HCT116 (cell line): ENCODE measurements at regions of chr1 and their contacts with region 1.

Region 1: GRCh38 chr1:205354259-205354904 is 2.3 kb downstream of the KLHDC8A start:
- DNase-seq: peak; percentile 54
- ATAC-seq: peak; percentile 80
- H3K4me3 ChIP-seq: no peak overlapping the region
- H3K27ac ChIP-seq: no peak overlapping the region
- H3K4me1 ChIP-seq: peaks cover 2 to 23% of the 10 kb centered on the region in 2 experiments; a peak in 3 of 4 replicates
- H3K27me3 ChIP-seq: no peaks in the 10 kb centered on the region
- CTCF ChIP-seq: peak; percentile 75 to 86 (median 84)
- POLR2A ChIP-seq: no peak
- RAD21 ChIP-seq: peak; percentile 74

Region 2: DNA sequence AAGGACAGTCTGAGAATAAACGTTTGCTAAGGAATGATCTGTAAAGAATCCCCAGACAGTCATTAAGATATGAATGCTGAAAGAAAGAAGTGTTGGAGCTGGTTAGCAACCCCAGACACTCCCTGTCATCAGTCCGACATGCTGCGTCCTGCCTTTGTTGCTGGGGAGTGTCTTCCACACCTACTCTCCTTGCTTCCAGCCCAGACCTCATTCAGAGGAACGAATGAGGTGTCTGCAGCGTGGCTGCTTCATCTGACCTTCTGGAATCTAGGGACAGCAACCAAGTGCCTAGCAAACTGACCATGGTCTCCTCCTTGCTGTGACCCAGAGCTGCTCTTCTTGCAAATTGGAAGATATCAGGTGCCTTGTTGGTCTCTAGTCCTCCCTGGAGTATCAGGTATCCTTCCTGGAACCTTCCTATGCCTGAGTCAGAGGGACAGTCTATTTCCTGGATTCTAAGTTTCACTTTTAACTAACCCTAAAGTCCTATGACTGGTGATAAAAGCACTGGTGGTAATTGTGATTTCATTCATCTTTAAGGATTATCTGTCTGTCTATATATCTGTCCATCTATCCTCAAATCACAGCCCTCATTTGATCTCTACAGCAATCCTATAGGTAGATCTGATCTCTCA is 438.4 kb before region 1 on chr1:
- CTCF ChIA-PET with region 1: no interaction called
- POLR2A ChIA-PET with region 1: no interaction called
- RAD21 ChIA-PET with region 1: no interaction called
- intact Hi-C with region 1: no loop called
- DNase-seq: no peak
- ATAC-seq: no peak
- H3K4me3 ChIP-seq: no peak overlapping the region
- H3K27ac ChIP-seq: no peak overlapping the region
- H3K4me1 ChIP-seq: peaks cover 0 to 8% of the 10 kb centered on the region in 2 experiments; a peak in 1 of 4 replicates
- H3K27me3 ChIP-seq: no peaks in the 10 kb centered on the region
- CTCF ChIP-seq: no peak
- POLR2A ChIP-seq: no peak
- RAD21 ChIP-seq: no peak

Region 3: DNA sequence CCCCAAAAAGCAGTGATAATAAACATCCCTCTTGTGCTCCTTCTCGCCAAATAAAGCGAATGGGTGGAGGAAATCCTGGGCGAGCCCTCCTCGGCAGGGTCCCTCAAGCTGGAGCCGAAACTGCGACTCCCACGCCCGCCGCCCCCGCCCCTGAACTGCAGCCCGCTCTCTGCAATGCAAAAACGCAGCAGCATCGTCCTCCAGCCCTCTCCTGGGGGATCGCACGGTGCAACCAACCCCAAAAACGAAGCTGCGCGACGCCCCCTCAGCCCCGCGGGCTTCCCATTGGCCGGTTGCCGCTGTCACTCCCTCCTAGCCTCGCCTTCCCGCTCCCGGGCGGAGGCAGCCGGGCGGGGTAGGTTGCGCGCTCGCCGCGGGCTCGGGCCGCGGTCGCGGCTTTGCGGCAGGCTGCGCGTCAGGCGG is 126.8 kb before region 1 on chr1 and contains the start of gene TMCC2:
- CTCF ChIA-PET with region 1: interaction called, 12 read pairs
- POLR2A ChIA-PET with region 1: no interaction called
- RAD21 ChIA-PET with region 1: no interaction called
- intact Hi-C with region 1: no loop called
- DNase-seq: peak; percentile 74
- ATAC-seq: peak; percentile 90
- H3K4me3 ChIP-seq: peak within 1 kb of the TSS; percentile 54 to 67
- H3K27ac ChIP-seq: no peak within 1 kb of the TSS; the same call in 1 of the 2 replicates
- H3K4me1 ChIP-seq: peaks cover 11 to 28% of the 10 kb centered on the region in 2 experiments; a peak in 3 of 4 replicates
- H3K27me3 ChIP-seq: no peaks in the 10 kb centered on the region
- CTCF ChIP-seq: no peak
- POLR2A ChIP-seq: peak; percentile 34
- RAD21 ChIP-seq: no peak
- total RNA-seq, gene TMCC2: 2.7 TPM

Region 4: DNA sequence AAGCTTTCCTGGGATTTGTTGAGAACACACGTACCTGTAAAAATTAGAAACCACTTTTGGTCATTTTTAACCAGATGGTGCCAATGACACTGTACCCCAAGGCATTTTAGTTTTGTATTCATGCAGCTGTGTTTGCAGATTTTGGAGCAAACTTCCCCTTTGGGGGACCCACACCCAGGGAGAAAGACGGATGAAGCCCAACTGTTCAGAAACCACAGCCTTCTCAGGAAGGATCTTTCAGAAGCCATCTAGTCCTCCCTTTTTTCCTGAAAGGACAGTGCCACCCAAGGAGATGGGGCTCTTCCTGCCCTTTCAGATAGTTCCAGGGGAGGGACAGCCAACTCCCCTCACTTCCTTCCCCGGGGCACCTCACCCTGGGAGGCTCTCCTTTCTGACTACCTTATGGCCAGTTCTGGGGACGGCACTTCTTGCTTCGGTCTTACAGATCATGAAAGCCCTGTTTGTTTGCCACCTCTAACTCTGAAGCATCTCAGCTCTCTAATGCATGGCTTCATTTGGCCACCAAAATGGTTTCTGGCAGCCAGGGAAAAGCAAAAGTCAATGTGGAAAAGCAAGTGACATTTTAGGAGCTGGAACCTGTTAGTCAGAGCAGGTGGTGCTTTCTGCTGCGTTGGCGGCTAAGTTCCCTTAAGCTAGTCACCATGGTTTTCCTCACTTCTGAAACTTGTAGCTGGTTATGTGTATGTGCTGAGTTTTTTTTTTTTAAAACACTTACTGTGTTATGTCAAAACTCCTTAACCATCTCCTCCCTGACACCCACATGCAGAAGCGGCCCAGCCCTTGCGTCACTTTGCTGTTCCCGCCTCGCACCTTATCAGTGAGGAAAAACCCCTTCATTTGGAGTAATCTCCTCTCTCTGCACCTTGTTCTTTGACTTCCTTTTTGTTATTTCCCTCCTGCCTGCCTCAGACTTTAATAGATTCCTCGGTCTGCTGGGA is 116.6 kb before region 1 on chr1:
- CTCF ChIA-PET with region 1: no interaction called
- POLR2A ChIA-PET with region 1: no interaction called
- RAD21 ChIA-PET with region 1: no interaction called
- intact Hi-C with region 1: no loop called
- DNase-seq: no peak
- ATAC-seq: no peak
- H3K4me3 ChIP-seq: no peak overlapping the region
- H3K27ac ChIP-seq: no peak overlapping the region
- H3K4me1 ChIP-seq: no peaks in the 10 kb centered on the region
- H3K27me3 ChIP-seq: no peaks in the 10 kb centered on the region
- CTCF ChIP-seq: no peak
- POLR2A ChIP-seq: no peak
- RAD21 ChIP-seq: no peak

Region 5: DNA sequence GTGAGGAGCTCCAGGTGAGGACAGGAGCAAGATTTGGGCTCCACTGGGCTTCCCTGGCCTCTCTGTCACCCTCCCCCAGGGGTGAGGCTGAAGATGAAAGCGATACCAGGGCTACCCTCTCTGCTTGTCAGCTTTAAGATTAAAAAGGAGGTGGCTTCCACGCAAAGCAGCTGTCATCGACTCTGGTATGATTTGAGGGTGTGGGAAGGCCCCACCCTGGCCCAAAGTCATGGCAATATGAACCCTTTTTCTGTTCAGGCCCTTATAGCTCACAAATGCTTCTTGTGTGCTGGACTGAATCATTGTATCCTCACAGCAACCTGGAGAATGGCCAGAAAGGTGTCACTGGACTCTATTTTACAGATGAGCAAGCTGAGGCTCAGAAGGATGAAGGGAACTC is 74.4 kb before region 1 on chr1:
- CTCF ChIA-PET with region 1: no interaction called
- POLR2A ChIA-PET with region 1: no interaction called
- RAD21 ChIA-PET with region 1: no interaction called
- intact Hi-C with region 1: no loop called
- DNase-seq: no peak
- ATAC-seq: no peak
- H3K4me3 ChIP-seq: no peak overlapping the region
- H3K27ac ChIP-seq: no peak overlapping the region
- H3K4me1 ChIP-seq: peaks cover 16 to 29% of the 10 kb centered on the region in 2 experiments
- H3K27me3 ChIP-seq: no peaks in the 10 kb centered on the region
- CTCF ChIP-seq: no peak
- POLR2A ChIP-seq: no peak
- RAD21 ChIP-seq: no peak

Region 6: DNA sequence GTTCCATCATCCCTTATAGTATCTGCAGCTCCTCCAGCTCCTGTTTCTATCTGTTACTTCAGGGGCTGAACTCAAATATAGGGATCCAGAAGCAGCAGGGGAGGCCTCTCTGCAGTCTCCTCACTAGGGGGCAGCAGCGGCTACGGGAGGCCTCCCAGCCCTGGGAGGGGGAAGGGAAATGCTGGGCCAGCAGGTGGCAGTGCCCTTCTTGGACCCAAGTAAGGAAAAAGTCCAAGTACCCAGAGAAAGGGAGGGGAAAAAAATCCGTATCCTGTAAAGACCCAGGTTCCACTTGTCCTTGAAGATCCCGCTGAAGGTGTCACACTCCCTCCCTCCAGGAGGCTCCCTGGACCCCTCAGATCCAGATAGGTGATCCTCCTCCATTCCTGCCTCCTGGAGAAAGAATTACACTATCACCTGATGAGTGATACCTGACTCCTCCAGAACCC is 18.7 kb before region 1 on chr1:
- CTCF ChIA-PET with region 1: interaction called, 16 read pairs
- POLR2A ChIA-PET with region 1: no interaction called
- RAD21 ChIA-PET with region 1: no interaction called
- intact Hi-C with region 1: no loop called
- DNase-seq: peak; percentile 79
- ATAC-seq: peak; percentile 99
- H3K4me3 ChIP-seq: no peak overlapping the region
- H3K27ac ChIP-seq: no peak overlapping the region
- H3K4me1 ChIP-seq: peaks cover 4 to 6% of the 10 kb centered on the region in 2 experiments; a peak in 3 of 4 replicates
- H3K27me3 ChIP-seq: no peaks in the 10 kb centered on the region
- CTCF ChIP-seq: peak; percentile 99 to 100 (median 99)
- POLR2A ChIP-seq: no peak
- RAD21 ChIP-seq: peak; percentile 94

Region 7: GRCh38 chr1:205365945-205366463 is 11.6 kb after region 1 on chr1:
- CTCF ChIA-PET with region 1: interaction called, 11 read pairs
- POLR2A ChIA-PET with region 1: no interaction called
- RAD21 ChIA-PET with region 1: no interaction called
- intact Hi-C with region 1: no loop called
- DNase-seq: no peak
- ATAC-seq: peak; percentile 49
- H3K4me3 ChIP-seq: no peak overlapping the region
- H3K27ac ChIP-seq: no peak overlapping the region
- H3K4me1 ChIP-seq: peaks cover 6 to 10% of the 10 kb centered on the region in 2 experiments; a peak in 3 of 4 replicates
- H3K27me3 ChIP-seq: no peaks in the 10 kb centered on the region
- CTCF ChIP-seq: no peak
- POLR2A ChIP-seq: no peak
- RAD21 ChIP-seq: no peak

Region 8: DNA sequence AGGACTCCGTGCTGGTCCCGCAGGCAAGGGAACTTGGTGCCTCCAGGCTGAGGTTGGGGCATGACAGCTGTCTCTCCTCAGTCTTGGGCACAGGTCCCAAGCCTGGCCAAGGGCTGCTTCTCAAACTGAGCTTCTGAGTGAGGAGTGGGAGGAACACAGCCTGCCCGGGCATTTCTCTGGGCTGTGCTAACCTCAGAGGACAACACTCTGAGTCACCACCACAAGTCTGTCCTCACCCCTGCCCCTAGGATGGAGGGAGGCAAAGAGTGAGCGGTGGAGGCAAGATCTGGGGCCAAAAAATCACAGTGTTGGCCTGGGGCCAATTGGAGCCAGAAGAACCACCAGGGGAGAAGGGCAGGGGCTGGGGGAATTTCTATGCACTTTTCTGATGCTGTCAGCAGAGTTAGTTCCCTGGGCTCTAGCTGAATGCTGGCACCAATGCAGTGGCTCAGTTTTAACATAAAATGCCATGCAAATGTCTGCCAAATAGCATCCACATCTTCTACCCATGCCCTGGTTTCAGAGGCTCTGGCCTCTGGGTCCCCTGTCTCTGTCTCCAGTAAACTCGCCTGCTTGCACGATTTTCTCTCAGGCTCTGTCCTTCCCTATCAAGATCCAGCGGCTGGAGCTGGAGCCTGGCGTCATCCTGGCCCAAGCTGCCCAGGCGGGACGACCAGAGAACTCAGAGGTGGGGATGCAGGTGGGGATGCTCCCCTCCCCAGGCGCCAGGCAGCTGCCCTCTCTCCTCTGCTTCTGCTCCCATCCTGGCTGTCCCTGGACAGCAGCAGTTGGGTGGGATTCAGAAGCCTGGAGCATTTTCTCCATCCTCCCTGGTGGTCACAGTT is 139.1 kb after region 1 on chr1:
- CTCF ChIA-PET with region 1: interaction called, 10 read pairs
- POLR2A ChIA-PET with region 1: no interaction called
- RAD21 ChIA-PET with region 1: no interaction called
- intact Hi-C with region 1: no loop called
- DNase-seq: no peak
- ATAC-seq: peak; percentile 81
- H3K4me3 ChIP-seq: no peak overlapping the region
- H3K27ac ChIP-seq: no peak overlapping the region
- H3K4me1 ChIP-seq: peaks cover 17 to 22% of the 10 kb centered on the region in 2 experiments
- H3K27me3 ChIP-seq: no peaks in the 10 kb centered on the region
- CTCF ChIP-seq: no peak
- POLR2A ChIP-seq: no peak
- RAD21 ChIP-seq: no peak

Region 9: DNA sequence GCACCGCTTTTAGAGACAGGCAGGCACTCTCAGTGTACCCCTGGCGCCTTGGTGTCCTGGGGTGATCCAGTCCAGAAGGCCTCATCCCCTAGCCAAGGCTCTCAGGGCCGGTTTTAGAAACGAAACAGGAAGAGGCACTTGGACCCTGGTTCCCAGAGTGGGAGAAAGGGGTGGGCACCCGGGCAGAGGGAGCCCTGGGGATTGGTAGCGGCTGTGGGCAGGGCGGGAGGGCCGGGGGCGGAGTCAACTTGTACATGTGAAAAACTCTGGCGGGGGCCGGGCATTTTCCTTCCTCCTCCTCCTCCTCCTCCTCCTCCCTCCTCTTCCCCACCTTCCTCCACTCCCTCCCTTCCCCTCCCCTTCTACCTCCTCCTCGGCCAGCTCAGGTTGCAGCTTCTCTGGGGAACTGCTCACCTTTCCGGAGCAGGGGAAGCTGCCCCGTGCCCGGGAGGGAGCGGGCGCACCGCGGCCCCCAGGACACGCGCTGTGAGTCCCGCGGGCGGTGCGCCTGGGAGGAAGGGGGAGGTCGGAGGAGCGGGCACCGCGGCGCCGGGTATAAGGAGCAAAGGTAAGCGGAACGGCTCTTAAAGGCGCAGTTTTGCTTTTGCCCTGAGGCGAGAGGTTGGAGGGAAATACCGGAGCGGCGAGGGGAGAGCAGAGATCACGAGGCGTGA is 150.1 kb after region 1 on chr1 and contains the start of gene CDK18:
- CTCF ChIA-PET with region 1: no interaction called
- POLR2A ChIA-PET with region 1: no interaction called
- RAD21 ChIA-PET with region 1: no interaction called
- intact Hi-C with region 1: no loop called
- DNase-seq: peak; percentile 73
- ATAC-seq: peak; percentile 89
- H3K4me3 ChIP-seq: peak within 1 kb of the TSS; percentile 75 to 76
- H3K27ac ChIP-seq: peak within 1 kb of the TSS; percentile 86
- H3K4me1 ChIP-seq: peaks cover 12 to 27% of the 10 kb centered on the region in 2 experiments
- H3K27me3 ChIP-seq: no peaks in the 10 kb centered on the region
- CTCF ChIP-seq: no peak
- POLR2A ChIP-seq: no peak
- RAD21 ChIP-seq: no peak
- total RNA-seq, gene CDK18: 32.0 TPM

Region 10: DNA sequence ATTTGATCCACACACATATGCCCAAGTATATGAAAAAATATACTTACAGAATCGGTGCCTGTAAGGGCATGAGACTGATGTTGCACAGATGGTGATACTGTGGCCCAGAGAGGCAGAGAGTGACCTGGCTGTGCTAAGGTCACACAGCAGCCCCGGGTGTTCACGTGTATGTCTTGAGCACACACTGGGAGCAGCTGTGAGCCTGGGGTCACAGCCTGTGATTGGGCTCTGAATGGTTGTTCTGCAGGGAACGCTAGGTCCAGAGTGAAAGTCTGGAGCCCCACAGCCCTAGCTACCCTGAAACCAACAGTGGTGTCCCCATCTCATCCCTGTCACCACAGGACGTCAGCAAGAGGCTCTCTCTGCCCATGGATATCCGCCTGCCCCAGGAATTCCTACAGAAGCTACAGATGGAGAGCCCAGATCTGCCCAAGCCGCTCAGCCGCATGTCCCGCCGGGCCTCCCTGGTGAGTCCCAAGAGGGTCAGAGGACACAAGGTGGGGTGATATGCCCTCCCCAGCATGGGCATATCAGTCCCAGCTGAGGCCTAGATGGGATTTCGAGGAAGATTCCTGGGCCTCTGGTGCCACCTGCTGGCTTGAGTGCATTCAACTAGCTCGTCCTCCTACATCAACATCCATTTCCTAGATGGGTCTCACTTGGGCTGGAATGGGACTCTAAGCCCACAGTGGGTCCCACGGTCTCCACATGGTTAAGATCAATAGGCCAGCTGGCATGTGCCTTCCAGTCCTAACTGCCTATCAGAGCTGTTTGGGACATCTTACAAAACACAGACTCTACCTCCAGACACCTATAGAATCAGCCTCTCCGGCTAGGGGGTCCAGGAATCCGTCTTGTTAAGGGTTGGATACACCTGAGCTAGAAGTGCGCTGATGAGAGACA is 169.8 kb after region 1 on chr1:
- CTCF ChIA-PET with region 1: interaction called, 35 read pairs
- POLR2A ChIA-PET with region 1: no interaction called
- RAD21 ChIA-PET with region 1: interaction called, 5 to 11 read pairs
- intact Hi-C with region 1: loop called (anchors 1 kb)
- DNase-seq: peak; percentile 46
- ATAC-seq: peak; percentile 71
- H3K4me3 ChIP-seq: no peak overlapping the region
- H3K27ac ChIP-seq: no peak overlapping the region
- H3K4me1 ChIP-seq: peaks cover 0 to 11% of the 10 kb centered on the region in 2 experiments; a peak in 2 of 4 replicates
- H3K27me3 ChIP-seq: no peaks in the 10 kb centered on the region
- CTCF ChIP-seq: peak; percentile 76 to 93 (median 84)
- POLR2A ChIP-seq: no peak
- RAD21 ChIP-seq: peak; percentile 97